ENCODE measurements at regions of chr17 and their contacts with region 1.

Region 1: DNA sequence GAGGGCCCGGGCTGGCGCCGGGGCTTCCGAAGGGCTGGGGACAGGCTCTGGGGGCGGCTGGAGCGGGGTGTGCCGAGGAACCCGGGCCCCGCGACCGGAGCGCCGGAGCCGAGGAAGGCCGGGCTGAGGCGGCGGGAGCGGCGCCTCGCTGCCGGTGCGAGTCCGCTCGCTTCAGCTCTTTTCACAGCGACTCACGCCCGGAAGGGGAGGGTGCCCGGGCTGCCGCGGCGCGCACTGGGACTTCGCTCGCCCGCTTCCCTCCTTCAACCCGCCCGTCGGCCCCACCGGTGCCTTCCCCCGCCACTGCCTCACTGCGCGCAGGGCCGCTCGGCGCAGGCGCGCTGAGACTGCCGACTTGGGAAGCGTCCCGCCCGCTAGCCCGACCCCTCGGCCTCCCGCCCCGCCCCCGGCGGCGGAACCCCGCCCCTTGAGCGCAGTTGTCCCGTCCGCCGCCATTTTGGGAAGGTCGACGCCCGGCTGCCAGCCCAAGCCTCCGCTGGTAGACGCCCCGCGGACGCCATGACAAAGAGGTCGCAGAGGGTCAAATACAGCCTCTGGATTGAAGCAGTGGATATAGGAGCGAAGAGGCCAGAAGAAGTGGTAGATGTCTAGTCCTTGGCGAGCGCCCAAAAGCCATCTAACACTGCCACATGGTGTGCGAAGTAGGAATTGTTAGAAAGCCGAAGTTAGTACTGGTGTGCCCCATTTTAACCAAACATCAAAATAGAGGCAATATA is at the start of gene UBE2G1:
- DNase-seq: peak; percentile 98
- H3K4me3 ChIP-seq: peak within 1 kb of the TSS; percentile 61 to 94 (median 88)
- H3K27ac ChIP-seq: peak within 1 kb of the TSS; percentile 65
- H3K4me1 ChIP-seq: peaks cover 4% of the 10 kb centered on the region
- H3K27me3 ChIP-seq: no peaks in the 10 kb centered on the region
- CTCF ChIP-seq: peak in 1 of 2 donors; percentile 9
- POLR2A ChIP-seq: peak; percentile 52
- total RNA-seq, gene UBE2G1: 77.2 and 79.6 TPM in 2 replicates

Region 2: GRCh38 chr17:4143563-4144421 is 222.7 kb before region 1 on chr17:
- CTCF ChIA-PET with region 1: no interaction called
- POLR2A ChIA-PET with region 1: no interaction called
- dilution Hi-C with region 1: no loop called
- intact Hi-C with region 1: loop called (anchors 2 kb)
- DNase-seq: peak; percentile 94
- H3K4me3 ChIP-seq: peak overlapping the region; percentile 49 to 87 (median 75)
- H3K27ac ChIP-seq: peak overlapping the region; percentile 90
- H3K4me1 ChIP-seq: peaks cover 15% of the 10 kb centered on the region
- H3K27me3 ChIP-seq: no peaks in the 10 kb centered on the region
- CTCF ChIP-seq: no peak
- POLR2A ChIP-seq: peak; percentile 94

Region 3: GRCh38 chr17:4263282-4264215 is 102.9 kb before region 1 on chr17 and contains the start of gene ANKFY1:
- CTCF ChIA-PET with region 1: no interaction called
- POLR2A ChIA-PET with region 1: no interaction called
- dilution Hi-C with region 1: no loop called
- intact Hi-C with region 1: loop called (anchors 1 kb)
- DNase-seq: peak; percentile 97
- H3K4me3 ChIP-seq: peak within 1 kb of the TSS; percentile 69 to 97 (median 70)
- H3K27ac ChIP-seq: peak within 1 kb of the TSS; percentile 72
- H3K4me1 ChIP-seq: peaks cover 16% of the 10 kb centered on the region
- H3K27me3 ChIP-seq: no peaks in the 10 kb centered on the region
- CTCF ChIP-seq: no peak
- POLR2A ChIP-seq: peak; percentile 70
- total RNA-seq, gene ANKFY1: 45.4 and 51.1 TPM in 2 replicates

Region 4: GRCh38 chr17:4310349-4311060 is 56.0 kb before region 1 on chr17:
- CTCF ChIA-PET with region 1: interaction called, 3 read pairs
- POLR2A ChIA-PET with region 1: no interaction called
- dilution Hi-C with region 1: no loop called
- intact Hi-C with region 1: loop called (anchors 5 kb)
- DNase-seq: peak; percentile 80
- H3K4me3 ChIP-seq: no peak overlapping the region
- H3K27ac ChIP-seq: peak overlapping the region; percentile 31
- H3K4me1 ChIP-seq: peaks cover 14% of the 10 kb centered on the region
- H3K27me3 ChIP-seq: no peaks in the 10 kb centered on the region
- CTCF ChIP-seq: no peak
- POLR2A ChIP-seq: no peak

Region 5: DNA sequence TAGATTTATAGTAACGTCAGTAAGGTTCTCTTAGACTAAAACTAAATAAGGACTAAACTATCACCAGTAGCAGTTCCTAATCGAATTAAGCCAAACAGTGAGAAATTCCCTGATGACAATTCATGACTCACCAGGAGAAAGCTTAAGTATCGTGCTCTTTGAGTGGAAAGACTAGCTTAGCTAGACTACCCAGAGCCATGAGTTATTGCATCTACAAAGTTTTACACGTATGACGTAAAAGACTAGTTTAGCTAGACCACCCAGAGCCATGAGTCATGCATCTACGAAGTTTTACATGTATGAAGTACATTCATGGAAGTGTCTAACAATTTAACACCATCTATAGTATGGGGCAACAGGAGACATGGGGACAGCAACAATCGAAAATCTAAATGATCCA is 36.7 kb before region 1 on chr17:
- CTCF ChIA-PET with region 1: interaction called, 5 read pairs
- POLR2A ChIA-PET with region 1: no interaction called
- dilution Hi-C with region 1: no loop called
- intact Hi-C with region 1: loop called (anchors 5 kb)
- DNase-seq: peak; percentile 54
- H3K4me3 ChIP-seq: no peak overlapping the region
- H3K27ac ChIP-seq: no peak overlapping the region
- H3K4me1 ChIP-seq: peaks cover 8% of the 10 kb centered on the region
- H3K27me3 ChIP-seq: no peaks in the 10 kb centered on the region
- CTCF ChIP-seq: no peak
- POLR2A ChIP-seq: no peak

Region 6: DNA sequence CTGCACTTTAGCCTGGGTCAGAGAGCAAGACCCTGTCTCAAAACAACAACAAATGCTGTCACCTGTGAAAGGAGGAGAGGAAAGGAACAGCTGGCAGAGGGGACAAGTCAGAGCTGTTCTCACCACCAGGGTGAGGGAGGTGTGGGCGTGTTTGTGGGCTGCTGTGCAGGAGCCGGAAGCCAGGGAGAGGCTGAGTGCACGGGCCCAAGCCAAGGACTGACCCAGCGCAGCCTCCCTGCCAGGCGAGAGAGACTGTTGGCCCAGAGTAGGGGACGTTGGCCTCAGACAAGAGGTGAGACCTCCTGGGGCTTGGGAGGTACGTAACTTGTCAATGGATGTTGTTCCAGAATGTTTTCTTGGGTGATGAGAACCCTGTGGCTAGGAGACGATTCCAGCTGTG is 142.9 kb after region 1 on chr17:
- CTCF ChIA-PET with region 1: no interaction called
- POLR2A ChIA-PET with region 1: no interaction called
- dilution Hi-C with region 1: no loop called
- intact Hi-C with region 1: no loop called
- DNase-seq: no peak
- H3K4me3 ChIP-seq: no peak overlapping the region
- H3K27ac ChIP-seq: no peak overlapping the region
- H3K4me1 ChIP-seq: peaks cover 25% of the 10 kb centered on the region
- H3K27me3 ChIP-seq: no peaks in the 10 kb centered on the region
- CTCF ChIP-seq: no peak
- POLR2A ChIP-seq: no peak

Region 7: GRCh38 chr17:4920351-4921048 is 554.0 kb after region 1 on chr17:
- CTCF ChIA-PET with region 1: no interaction called
- POLR2A ChIA-PET with region 1: no interaction called
- dilution Hi-C with region 1: no loop called
- intact Hi-C with region 1: no loop called
- DNase-seq: no peak
- H3K4me3 ChIP-seq: no peak overlapping the region
- H3K27ac ChIP-seq: no peak overlapping the region
- H3K4me1 ChIP-seq: no peaks in the 10 kb centered on the region
- H3K27me3 ChIP-seq: no peaks in the 10 kb centered on the region
- CTCF ChIP-seq: no peak
- POLR2A ChIP-seq: no peak